ENCODE measurements at regions of chr12 and their contacts with region 1.

Region 1: GRCh38 chr12:89162704-89163261 is 189.5 kb downstream of the DUSP6 start:
- DNase-seq: peak; percentile 59
- H3K4me3 Mint-ChIP-seq: no peak overlapping the region
- H3K27ac Mint-ChIP-seq: no peak overlapping the region
- H3K4me1 Mint-ChIP-seq: peaks cover 23% of the 10 kb centered on the region
- H3K27me3 Mint-ChIP-seq: no peaks in the 10 kb centered on the region

Region 2: GRCh38 chr12:89051065-89051677 is 111.6 kb before region 1 on chr12:
- intact Hi-C with region 1: loop called (anchors 1 kb)
- DNase-seq: no peak
- H3K4me3 Mint-ChIP-seq: no peak overlapping the region
- H3K27ac Mint-ChIP-seq: no peak overlapping the region
- H3K4me1 Mint-ChIP-seq: peaks cover 31% of the 10 kb centered on the region
- H3K27me3 Mint-ChIP-seq: no peaks in the 10 kb centered on the region

Region 3: DNA sequence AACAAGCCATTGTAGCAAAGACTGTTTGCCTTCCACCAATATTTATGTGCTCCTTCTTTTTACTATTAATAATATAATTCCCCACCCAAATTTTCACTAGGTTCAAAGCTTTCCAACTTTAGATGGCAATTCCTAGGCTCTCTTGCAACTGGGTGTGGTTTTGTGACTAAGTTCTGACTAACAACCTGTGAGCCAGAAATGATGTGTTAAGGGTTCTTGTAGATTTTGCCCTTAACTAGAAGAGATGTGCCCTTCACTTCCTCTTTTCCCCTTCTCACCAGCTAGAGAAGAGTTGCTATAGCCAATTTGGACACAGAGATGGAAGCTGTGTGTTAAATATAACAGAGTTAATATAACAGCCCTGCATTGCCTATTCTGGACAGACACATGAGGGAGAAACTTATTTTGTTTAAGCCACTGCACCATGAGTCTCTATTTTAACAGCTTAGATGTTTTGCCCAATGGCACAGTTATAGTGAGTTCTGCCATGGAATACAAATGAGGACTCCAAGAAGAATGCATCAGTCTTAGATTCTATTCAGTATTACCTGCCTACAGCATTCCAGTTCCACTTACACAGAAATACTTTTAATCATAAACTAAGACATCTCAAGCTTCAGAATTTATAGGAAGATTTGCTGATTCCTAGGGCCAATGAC is 26.7 kb before region 1 on chr12:
- intact Hi-C with region 1: loop called (anchors 1 kb)
- DNase-seq: no peak
- H3K4me3 Mint-ChIP-seq: no peak overlapping the region
- H3K27ac Mint-ChIP-seq: peak overlapping the region; percentile 58
- H3K4me1 Mint-ChIP-seq: peaks cover 33% of the 10 kb centered on the region
- H3K27me3 Mint-ChIP-seq: peaks cover 2% of the 10 kb centered on the region

Region 4: DNA sequence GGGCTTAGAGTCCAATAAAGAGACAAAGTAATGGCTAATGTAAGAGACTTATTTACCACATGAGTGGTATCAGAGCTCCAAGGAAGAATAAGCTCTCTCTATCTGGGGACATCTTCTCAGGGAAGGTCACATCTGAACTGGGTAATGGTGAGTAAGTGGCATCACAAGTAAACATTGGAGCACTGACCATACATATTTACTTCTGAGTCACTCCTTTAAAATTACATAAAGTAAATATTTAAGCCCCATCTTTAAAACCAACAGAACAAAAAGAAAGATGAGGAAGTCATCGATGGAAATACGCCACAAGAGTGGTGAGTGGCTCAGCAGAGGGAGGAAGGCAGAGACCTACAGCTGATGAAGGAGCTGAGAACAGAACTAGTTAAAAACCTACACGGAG is 29.6 kb after region 1 on chr12:
- intact Hi-C with region 1: no loop called
- DNase-seq: no peak
- H3K4me3 Mint-ChIP-seq: no peak overlapping the region
- H3K27ac Mint-ChIP-seq: no peak overlapping the region
- H3K4me1 Mint-ChIP-seq: no peaks in the 10 kb centered on the region
- H3K27me3 Mint-ChIP-seq: peaks cover 2% of the 10 kb centered on the region

Region 5: DNA sequence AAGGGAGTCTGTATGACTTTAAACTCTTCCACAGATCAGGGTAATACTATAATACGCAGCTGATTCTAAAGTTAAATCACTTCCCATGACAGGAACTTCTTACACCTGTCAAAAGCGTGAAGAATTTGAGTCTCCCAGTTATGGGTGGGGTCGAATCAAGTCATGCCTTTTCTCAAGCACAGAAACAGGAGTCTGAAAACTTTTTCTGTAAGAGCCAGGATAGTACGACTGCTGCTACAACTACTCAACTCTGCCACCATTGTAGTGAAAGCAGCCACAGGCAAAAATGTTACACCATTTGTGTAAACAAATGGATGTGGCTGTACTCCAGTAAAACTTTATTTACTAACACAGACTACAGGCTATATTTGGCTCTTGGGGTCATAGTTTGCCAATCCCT is 99.2 kb after region 1 on chr12:
- intact Hi-C with region 1: loop called (anchors 1 kb)
- DNase-seq: no peak
- H3K4me3 Mint-ChIP-seq: no peak overlapping the region
- H3K27ac Mint-ChIP-seq: no peak overlapping the region
- H3K4me1 Mint-ChIP-seq: peaks cover 34% of the 10 kb centered on the region
- H3K27me3 Mint-ChIP-seq: no peaks in the 10 kb centered on the region

Region 6: GRCh38 chr12:89389755-89390661 is 227.2 kb after region 1 on chr12:
- intact Hi-C with region 1: loop called (anchors 2 kb)
- DNase-seq: no peak
- H3K4me3 Mint-ChIP-seq: no peak overlapping the region
- H3K27ac Mint-ChIP-seq: peak overlapping the region; percentile 78
- H3K4me1 Mint-ChIP-seq: peaks cover 33% of the 10 kb centered on the region
- H3K27me3 Mint-ChIP-seq: no peaks in the 10 kb centered on the region

Region 7: GRCh38 chr12:89524541-89525285 is 361.9 kb after region 1 on chr12 and contains the start of gene GALNT4:
- intact Hi-C with region 1: loop called (anchors 5 kb)
- DNase-seq: peak; percentile 74
- H3K4me3 Mint-ChIP-seq: peak within 1 kb of the TSS; percentile 92
- H3K27ac Mint-ChIP-seq: peak within 1 kb of the TSS; percentile 94
- H3K4me1 Mint-ChIP-seq: peaks cover 45% of the 10 kb centered on the region
- H3K27me3 Mint-ChIP-seq: no peaks in the 10 kb centered on the region
- total RNA-seq, gene GALNT4: 8.7 TPM in 2 replicates

Measured in activated T-helper 1 cell treated with anti-CD3 and anti-CD28 coated beads, Interleukin-12 subunit alpha, Interleukin-12 subunit beta, Interleukin-2, Interleukin-4 antibody, amounts not matched to agents 30 ng/mL and 10 ng/mL and 1 ng/mL, durations not matched to agents 14 hours and 24 hours and 36 hours (primary cell).